SK-N-SH (cell line): ENCODE measurements at regions of chr13 and their contacts with region 1.

Region 1: DNA sequence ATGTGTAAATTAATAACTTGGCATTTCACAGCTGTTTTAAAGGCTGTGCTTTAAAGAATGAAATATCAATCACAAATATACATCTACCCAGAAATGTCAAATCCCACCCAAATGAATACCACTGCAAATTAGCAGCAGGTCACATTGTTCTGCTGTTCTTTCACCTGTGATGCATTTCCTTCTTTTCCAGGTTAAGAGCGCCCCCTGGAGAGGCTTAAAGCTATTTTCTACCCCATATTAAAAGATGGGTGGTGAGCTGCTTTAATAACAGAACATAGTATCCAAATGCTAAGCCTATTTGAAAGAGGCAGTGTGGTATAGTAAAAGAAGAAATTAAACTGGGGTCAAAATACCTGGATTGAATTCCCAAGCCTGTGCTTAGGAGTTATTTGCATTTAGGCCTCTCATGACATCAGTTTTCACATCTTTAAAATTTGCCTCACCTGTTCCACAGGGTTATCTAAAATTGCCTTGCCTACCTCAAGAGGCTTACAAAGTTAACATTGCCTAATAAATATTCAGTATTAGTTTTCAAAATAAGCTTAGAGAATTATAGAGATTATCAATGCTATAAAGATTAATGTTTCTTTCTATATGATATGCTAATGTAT is 396.9 kb upstream of the SLITRK5 start:
- DNase-seq: peak; percentile 25
- H3K4me3 ChIP-seq: no peak overlapping the region; a peak in 1 of 4 replicates
- H3K27ac ChIP-seq: no peak overlapping the region
- H3K4me1 ChIP-seq: no peaks in the 10 kb centered on the region
- H3K27me3 ChIP-seq: no peaks in the 10 kb centered on the region
- CTCF ChIP-seq: peak; percentile 88
- EP300 ChIP-seq: no peak
- RAD21 ChIP-seq: peak; percentile 70

Region 2: GRCh38 chr13:87123987-87124784 is 150.1 kb before region 1 on chr13:
- CTCF ChIA-PET with region 1: no interaction called
- POLR2A ChIA-PET with region 1: no interaction called
- DNase-seq: no peak
- H3K4me3 ChIP-seq: 0 out of 4 replicates have a peak overlapping the region, but pooled peaks of 1 of the 2 experiments have one; percentile 20
- H3K27ac ChIP-seq: no peak overlapping the region
- H3K4me1 ChIP-seq: no peaks in the 10 kb centered on the region
- H3K27me3 ChIP-seq: no peaks in the 10 kb centered on the region
- CTCF ChIP-seq: no peak
- EP300 ChIP-seq: no peak
- RAD21 ChIP-seq: no peak

Region 3: DNA sequence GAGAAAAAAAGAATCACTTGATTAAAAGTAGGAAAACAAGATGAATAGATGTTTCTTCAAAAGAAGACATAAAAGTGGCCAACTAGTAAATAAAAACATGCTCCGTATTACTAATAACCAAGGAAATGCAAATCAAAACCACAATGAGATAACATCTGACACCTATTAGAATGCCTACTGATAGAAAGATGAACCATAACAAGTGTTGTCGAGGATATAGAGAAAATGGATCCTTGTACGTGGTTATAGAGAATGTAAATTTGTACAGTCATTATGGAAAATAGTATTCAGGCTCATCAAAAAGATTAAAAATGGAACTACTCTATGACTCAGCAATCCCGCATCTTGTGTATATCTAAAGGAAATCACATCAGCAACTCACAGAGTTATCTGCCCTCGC is 18.9 kb before region 1 on chr13:
- CTCF ChIA-PET with region 1: interaction called, 12 read pairs
- POLR2A ChIA-PET with region 1: no interaction called
- DNase-seq: no peak
- H3K4me3 ChIP-seq: no peak overlapping the region
- H3K27ac ChIP-seq: no peak overlapping the region
- H3K4me1 ChIP-seq: no peaks in the 10 kb centered on the region
- H3K27me3 ChIP-seq: no peaks in the 10 kb centered on the region
- CTCF ChIP-seq: no peak
- EP300 ChIP-seq: no peak
- RAD21 ChIP-seq: no peak

Region 4: DNA sequence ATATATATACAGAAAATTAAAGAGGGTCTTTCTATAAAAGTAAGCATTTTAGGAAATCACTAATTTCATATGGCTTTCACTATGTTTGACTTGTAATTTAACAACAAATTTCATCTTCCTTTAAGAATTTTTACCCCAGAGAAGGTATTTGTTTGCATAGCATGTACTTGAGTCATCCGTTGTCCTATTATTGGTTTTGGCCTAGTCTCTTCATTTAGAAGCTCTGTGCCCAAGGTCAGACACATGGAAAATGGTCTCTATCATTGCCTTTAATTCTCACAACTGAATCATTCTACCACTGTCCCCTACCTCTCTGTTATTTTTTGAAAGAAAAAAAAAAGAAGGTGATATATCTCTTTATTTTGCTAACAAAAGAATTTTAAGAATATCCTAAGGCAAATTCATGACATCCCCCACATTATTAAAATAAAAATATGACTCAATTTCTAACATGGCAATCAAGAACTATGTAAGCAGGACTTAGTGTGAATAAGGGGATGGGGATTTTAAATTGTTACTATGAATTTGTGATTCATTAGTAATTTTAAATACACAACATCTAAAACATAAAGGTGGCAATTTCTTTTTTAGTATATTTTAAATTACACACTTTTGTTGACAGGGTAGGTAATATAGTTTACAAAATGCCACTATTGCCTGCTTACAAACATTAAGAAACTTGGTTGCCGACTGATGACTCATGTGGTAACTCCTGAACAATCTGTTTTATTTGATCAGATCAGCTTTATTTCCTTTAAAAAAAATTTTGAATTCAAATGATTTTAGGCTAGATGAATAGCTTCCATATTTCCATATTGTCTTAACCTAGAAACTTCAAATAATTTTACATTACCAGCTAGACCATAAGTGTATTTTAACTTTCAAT is 410.8 kb after region 1 on chr13:
- CTCF ChIA-PET with region 1: no interaction called
- POLR2A ChIA-PET with region 1: no interaction called
- DNase-seq: no peak
- H3K4me3 ChIP-seq: no peak overlapping the region
- H3K27ac ChIP-seq: no peak overlapping the region
- H3K4me1 ChIP-seq: no peaks in the 10 kb centered on the region; a peak in 1 of 4 replicates
- H3K27me3 ChIP-seq: no peaks in the 10 kb centered on the region
- CTCF ChIP-seq: no peak
- EP300 ChIP-seq: no peak
- RAD21 ChIP-seq: no peak

Region 5: GRCh38 chr13:88107570-88107969 is 833.3 kb after region 1 on chr13:
- CTCF ChIA-PET with region 1: no interaction called
- POLR2A ChIA-PET with region 1: no interaction called
- DNase-seq: no peak
- H3K4me3 ChIP-seq: no peak overlapping the region
- H3K27ac ChIP-seq: no peak overlapping the region
- H3K4me1 ChIP-seq: no peaks in the 10 kb centered on the region
- H3K27me3 ChIP-seq: no peaks in the 10 kb centered on the region
- CTCF ChIP-seq: no peak
- EP300 ChIP-seq: no peak
- RAD21 ChIP-seq: no peak